ENCODE measurements at regions of chr1 and their contacts with region 1.

Region 1: GRCh38 chr1:7042322-7043190 is 257.3 kb downstream of the CAMTA1 start:
- DNase-seq: peak in 1 of 2 experiments; percentile 56
- H3K4me3 ChIP-seq: no peak overlapping the region
- H3K27ac ChIP-seq: no peak overlapping the region
- H3K4me1 ChIP-seq: peaks cover 0 to 11% (median 5%) of the 10 kb centered on the region in 4 experiments; a peak in 5 of 7 replicates
- H3K27me3 ChIP-seq: no peaks in the 10 kb centered on the region
- CTCF ChIP-seq: peak in 2 of 3 experiments; percentile 65 to 67; a peak in 3 of 4 replicates
- EP300 ChIP-seq: no peak
- POLR2A ChIP-seq: no peak
- RAD21 ChIP-seq: peak; percentile 69 to 74

Region 2: GRCh38 chr1:6969106-6969505 is 73.5 kb before region 1 on chr1:
- CTCF ChIA-PET with region 1: interaction called, 12 read pairs
- POLR2A ChIA-PET with region 1: no interaction called
- DNase-seq: no peak
- H3K4me3 ChIP-seq: no peak overlapping the region
- H3K27ac ChIP-seq: no peak overlapping the region
- H3K4me1 ChIP-seq: peaks cover 0 to 8% (median 3%) of the 10 kb centered on the region in 4 experiments; a peak in 3 of 7 replicates
- H3K27me3 ChIP-seq: no peaks in the 10 kb centered on the region
- CTCF ChIP-seq: no peak
- EP300 ChIP-seq: no peak
- POLR2A ChIP-seq: no peak
- RAD21 ChIP-seq: no peak

Region 3: GRCh38 chr1:7013833-7014639 is 28.5 kb before region 1 on chr1:
- CTCF ChIA-PET with region 1: interaction called, 15 read pairs
- POLR2A ChIA-PET with region 1: no interaction called
- DNase-seq: no peak
- H3K4me3 ChIP-seq: no peak overlapping the region
- H3K27ac ChIP-seq: no peak overlapping the region
- H3K4me1 ChIP-seq: no peaks in the 10 kb centered on the region
- H3K27me3 ChIP-seq: no peaks in the 10 kb centered on the region
- CTCF ChIP-seq: no peak
- EP300 ChIP-seq: no peak
- POLR2A ChIP-seq: no peak
- RAD21 ChIP-seq: no peak

Region 4: GRCh38 chr1:7060745-7061144 is 18.2 kb after region 1 on chr1:
- CTCF ChIA-PET with region 1: interaction called, 48 read pairs
- POLR2A ChIA-PET with region 1: no interaction called
- DNase-seq: no peak
- H3K4me3 ChIP-seq: no peak overlapping the region
- H3K27ac ChIP-seq: no peak overlapping the region
- H3K4me1 ChIP-seq: no peaks in the 10 kb centered on the region
- H3K27me3 ChIP-seq: no peaks in the 10 kb centered on the region
- CTCF ChIP-seq: no peak
- EP300 ChIP-seq: no peak
- POLR2A ChIP-seq: no peak
- RAD21 ChIP-seq: no peak

Region 5: DNA sequence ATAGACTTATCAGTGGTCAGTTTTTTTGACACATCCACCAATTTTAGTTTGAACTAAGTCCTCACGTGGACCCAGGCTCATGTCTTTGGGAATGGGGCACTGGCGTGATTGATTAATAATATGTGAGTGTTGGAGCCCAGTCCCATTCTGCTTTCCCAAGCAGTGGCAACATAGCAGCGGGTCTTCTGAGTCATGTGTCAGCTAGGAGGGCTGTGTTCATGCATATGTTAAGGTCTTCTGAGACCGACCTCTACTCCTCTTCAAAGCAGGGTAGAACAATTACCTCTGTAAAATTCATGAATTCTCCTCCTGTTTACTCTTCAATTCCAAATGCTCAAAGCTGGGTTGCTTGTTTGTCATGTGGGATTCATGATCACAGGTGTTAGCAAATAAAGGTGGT is 34.0 kb after region 1 on chr1:
- CTCF ChIA-PET with region 1: interaction called, 107 read pairs
- POLR2A ChIA-PET with region 1: no interaction called
- DNase-seq: no peak
- H3K4me3 ChIP-seq: no peak overlapping the region
- H3K27ac ChIP-seq: no peak overlapping the region
- H3K4me1 ChIP-seq: no peaks in the 10 kb centered on the region
- H3K27me3 ChIP-seq: peaks cover 0 to 3% (median 1%) of the 10 kb centered on the region in 4 experiments; a peak in 1 of 7 replicates
- CTCF ChIP-seq: no peak
- EP300 ChIP-seq: no peak
- POLR2A ChIP-seq: no peak
- RAD21 ChIP-seq: no peak

Region 6: DNA sequence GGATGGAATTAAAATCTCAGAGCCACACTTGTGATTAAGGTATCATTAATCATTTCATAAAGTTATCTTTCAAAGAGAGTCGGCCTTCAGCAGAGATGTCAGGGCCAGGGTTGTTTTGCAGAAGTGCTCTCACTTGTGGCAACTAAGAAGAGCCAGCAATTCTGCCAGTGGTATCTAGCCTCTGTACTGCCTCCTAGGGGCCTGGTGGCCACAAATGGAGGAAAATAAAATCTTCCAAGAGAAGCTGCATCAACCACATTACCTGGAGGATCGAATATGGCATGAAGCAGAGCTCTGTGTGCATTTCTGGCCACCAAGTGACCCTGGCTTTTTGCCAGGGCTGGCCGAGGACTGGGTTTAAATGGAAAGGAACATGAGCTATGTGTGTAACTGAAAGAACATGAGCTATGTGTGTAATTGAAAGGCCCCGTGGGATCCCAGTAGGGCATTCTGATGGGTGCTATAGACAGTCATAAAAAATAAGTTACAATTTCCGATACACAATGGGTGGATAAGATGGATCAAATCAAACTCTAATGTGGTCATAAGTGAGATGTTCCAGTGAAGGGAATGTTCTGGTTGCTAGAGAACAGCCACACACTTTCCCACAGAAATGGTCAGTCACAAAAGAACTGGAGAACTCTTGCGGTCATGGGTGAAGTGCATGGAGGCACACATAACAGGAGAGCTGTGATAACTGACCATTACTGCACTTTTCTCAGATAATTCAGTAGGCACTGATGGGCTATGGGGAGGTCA is 78.5 kb after region 1 on chr1:
- CTCF ChIA-PET with region 1: interaction called, 18 read pairs
- POLR2A ChIA-PET with region 1: no interaction called
- DNase-seq: no peak
- H3K4me3 ChIP-seq: no peak overlapping the region
- H3K27ac ChIP-seq: no peak overlapping the region
- H3K4me1 ChIP-seq: peaks cover 0 to 4% (median 3%) of the 10 kb centered on the region in 4 experiments; a peak in 5 of 7 replicates
- H3K27me3 ChIP-seq: no peaks in the 10 kb centered on the region
- CTCF ChIP-seq: peak in 2 of 3 experiments; percentile 58 to 63; a peak in 3 of 4 replicates
- EP300 ChIP-seq: no peak
- POLR2A ChIP-seq: no peak
- RAD21 ChIP-seq: peak; percentile 34 to 57

Region 7: GRCh38 chr1:7265771-7266648 is 223.5 kb after region 1 on chr1:
- CTCF ChIA-PET with region 1: no interaction called
- POLR2A ChIA-PET with region 1: no interaction called
- DNase-seq: peak in 1 of 2 experiments; percentile 28
- H3K4me3 ChIP-seq: no peak overlapping the region
- H3K27ac ChIP-seq: no peak overlapping the region
- H3K4me1 ChIP-seq: no peaks in the 10 kb centered on the region
- H3K27me3 ChIP-seq: no peaks in the 10 kb centered on the region
- CTCF ChIP-seq: no peak
- EP300 ChIP-seq: no peak
- POLR2A ChIP-seq: no peak
- RAD21 ChIP-seq: no peak

Measured in H1 (cell line).